Activated naive CD4-positive, alpha-beta T cell treated with anti-CD3 and anti-CD28 coated beads for 36 hours (primary cell): ENCODE measurements at regions of chr5 and their contacts with region 1.

Region 1: GRCh38 chr5:77491783-77492652 is at the start of gene WDR41:
- DNase-seq: peak; percentile 86
- H3K4me3 Mint-ChIP-seq: peak within 1 kb of the TSS; percentile 89
- H3K27ac Mint-ChIP-seq: peak within 1 kb of the TSS; percentile 82
- H3K4me1 Mint-ChIP-seq: peaks cover 15% of the 10 kb centered on the region
- H3K27me3 Mint-ChIP-seq: peaks cover 6% of the 10 kb centered on the region
- total RNA-seq, gene WDR41: 22.4 to 23.0 TPM

Region 2: DNA sequence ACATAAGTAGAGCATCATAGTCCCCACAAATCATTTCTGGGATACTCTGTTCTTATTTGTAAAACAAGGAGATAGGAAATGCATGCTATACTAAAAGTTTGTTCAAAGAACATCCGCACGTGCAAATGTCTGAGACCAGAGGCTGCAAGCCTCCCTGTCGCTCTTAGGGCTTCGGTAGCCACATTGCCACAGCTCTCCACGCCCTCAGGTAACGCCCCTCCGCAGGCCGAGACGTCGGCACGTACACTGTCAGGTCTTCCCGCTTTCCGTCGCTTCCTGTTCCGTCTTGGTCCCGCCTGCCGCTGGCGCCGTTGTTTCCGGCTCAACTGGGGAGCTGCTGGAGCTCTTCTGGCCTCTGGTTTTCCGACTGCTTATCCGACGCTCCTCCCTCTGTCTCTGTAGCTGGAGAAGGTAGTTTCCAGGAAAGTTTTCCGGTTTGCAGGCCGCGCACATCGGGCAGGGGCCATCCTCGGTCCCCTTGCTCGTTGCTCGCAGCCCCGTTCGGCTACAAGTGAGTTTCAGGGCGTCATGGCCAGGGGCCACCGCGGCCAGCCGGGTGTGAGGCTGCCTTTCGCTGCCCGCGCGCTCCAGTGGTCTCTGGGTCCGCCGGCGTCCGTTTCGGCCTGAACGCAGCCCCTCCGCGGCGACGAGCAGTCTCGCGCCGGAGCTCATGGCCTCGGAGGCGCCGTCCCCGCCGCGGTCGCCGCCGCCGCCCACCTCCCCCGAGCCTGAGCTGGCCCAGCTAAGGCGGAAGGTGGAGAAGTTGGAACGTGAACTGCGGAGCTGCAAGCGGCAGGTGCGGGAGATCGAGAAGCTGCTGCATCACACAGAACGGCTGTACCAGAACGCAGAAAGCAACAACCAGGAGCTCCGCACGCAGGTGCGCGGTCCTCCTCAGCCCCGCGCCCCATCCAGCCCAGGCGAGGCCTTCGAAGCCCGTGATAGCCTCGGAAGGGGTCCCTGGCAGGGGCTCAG is 461.6 kb before region 1 on chr5 and contains the start of gene AGGF1:
- CTCF ChIA-PET with region 1: interaction called, 5 read pairs
- intact Hi-C with region 1: loop called (anchors 1 kb)
- DNase-seq: peak; percentile 96
- H3K4me3 Mint-ChIP-seq: peak within 1 kb of the TSS; percentile 91
- H3K27ac Mint-ChIP-seq: peak within 1 kb of the TSS; percentile 88
- H3K4me1 Mint-ChIP-seq: peaks cover 23% of the 10 kb centered on the region
- H3K27me3 Mint-ChIP-seq: no peaks in the 10 kb centered on the region
- total RNA-seq, gene AGGF1: 20.3 to 23.0 TPM

Region 3: DNA sequence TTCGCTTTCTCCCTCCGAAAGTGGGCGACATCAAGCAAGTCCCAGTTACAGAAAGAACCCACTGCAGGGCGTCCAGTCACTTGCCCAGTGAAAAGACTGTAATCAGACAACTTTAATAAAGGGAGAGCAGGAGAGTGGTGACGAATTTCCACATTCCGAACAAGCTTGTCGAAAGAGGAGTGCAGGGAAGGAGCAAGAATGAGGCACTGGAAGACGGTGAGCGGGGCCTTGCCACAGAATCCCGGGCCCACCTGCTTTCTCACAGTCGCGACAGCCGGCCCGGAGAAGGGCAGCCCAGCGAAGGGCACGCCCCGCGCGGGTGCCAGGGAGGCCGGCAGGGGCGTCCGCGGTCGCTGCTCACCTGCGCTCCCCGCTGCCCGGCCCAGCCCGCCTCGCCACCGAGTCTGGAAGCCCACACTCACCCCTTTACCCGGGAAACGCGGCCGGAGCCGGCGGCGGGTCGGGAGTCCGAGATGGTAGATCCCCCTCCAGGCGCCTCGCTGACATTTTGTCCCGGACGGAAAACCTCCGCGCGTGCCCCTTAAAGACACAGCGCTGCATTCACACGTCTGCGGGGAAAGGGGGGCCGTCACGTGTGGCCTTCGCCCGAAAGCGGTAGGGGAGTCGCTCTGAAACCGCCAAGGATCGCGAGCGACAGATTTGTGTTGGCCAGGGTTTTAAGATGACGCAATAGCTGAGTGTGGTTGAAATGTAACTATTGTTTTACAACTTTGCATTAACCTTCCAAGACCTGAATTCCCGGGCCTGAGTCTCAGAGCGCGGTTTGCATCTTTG is 405.1 kb before region 1 on chr5 and contains the start of gene ZBED3:
- CTCF ChIA-PET with region 1: no interaction called
- intact Hi-C with region 1: loop called (anchors 2 kb)
- DNase-seq: peak; percentile 73
- H3K4me3 Mint-ChIP-seq: peak within 1 kb of the TSS; percentile 87
- H3K27ac Mint-ChIP-seq: peak within 1 kb of the TSS; percentile 36
- H3K4me1 Mint-ChIP-seq: peaks cover 9% of the 10 kb centered on the region
- H3K27me3 Mint-ChIP-seq: no peaks in the 10 kb centered on the region
- total RNA-seq, gene ZBED3: 1.9 to 3.3 TPM

Region 4: GRCh38 chr5:77155179-77155785 is 336.7 kb before region 1 on chr5:
- CTCF ChIA-PET with region 1: interaction called, 11 read pairs
- intact Hi-C with region 1: no loop called
- DNase-seq: peak; percentile 66
- H3K4me3 Mint-ChIP-seq: no peak overlapping the region
- H3K27ac Mint-ChIP-seq: peak overlapping the region; percentile 60
- H3K4me1 Mint-ChIP-seq: peaks cover 27% of the 10 kb centered on the region
- H3K27me3 Mint-ChIP-seq: no peaks in the 10 kb centered on the region

Region 5: DNA sequence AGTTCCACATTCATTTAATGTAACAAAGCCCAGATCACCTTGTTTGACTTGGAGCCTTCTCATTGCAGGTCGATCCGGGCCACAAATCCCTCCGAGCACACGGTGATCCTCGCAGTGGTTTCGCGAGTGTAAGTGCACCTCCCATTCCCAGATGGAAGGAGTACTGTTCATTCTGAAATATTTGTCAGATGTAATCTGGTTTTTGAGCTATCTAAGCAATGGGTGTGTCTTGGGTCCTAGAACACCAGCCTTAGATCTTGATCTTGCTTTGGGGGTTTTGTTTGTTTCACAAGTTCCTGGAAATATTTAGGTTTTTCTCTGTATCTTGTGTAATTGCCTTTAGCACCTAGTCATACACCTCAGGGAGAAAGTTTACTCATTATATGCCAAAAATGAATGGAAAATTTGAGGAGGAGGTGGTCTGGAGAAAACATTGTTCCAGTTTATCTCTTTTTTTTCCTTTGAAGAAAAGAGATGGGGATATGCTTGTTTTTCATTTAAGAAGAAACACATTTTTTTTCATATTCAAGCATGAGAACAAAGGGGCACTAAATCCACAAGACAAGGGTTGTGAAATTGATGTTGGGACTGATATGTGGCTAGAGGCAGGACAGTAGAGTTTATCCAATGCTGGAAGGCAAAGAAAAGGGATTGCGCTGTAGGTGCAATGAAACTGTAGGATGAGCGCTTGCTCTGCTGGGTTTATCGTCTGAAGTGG is 162.9 kb before region 1 on chr5:
- CTCF ChIA-PET with region 1: interaction called, 6 read pairs
- intact Hi-C with region 1: loop called (anchors 10 kb)
- DNase-seq: no peak
- H3K4me3 Mint-ChIP-seq: no peak overlapping the region
- H3K27ac Mint-ChIP-seq: peak overlapping the region; percentile 66
- H3K4me1 Mint-ChIP-seq: peaks cover 24% of the 10 kb centered on the region
- H3K27me3 Mint-ChIP-seq: peaks cover 4% of the 10 kb centered on the region

Region 6: GRCh38 chr5:77339337-77339890 is 152.6 kb before region 1 on chr5:
- CTCF ChIA-PET with region 1: no interaction called
- intact Hi-C with region 1: no loop called
- DNase-seq: no peak
- H3K4me3 Mint-ChIP-seq: no peak overlapping the region
- H3K27ac Mint-ChIP-seq: no peak overlapping the region
- H3K4me1 Mint-ChIP-seq: no peaks in the 10 kb centered on the region
- H3K27me3 Mint-ChIP-seq: no peaks in the 10 kb centered on the region

Region 7: GRCh38 chr5:77590347-77590746 is 98.3 kb after region 1 on chr5:
- CTCF ChIA-PET with region 1: no interaction called
- intact Hi-C with region 1: no loop called
- DNase-seq: no peak
- H3K4me3 Mint-ChIP-seq: no peak overlapping the region
- H3K27ac Mint-ChIP-seq: no peak overlapping the region
- H3K4me1 Mint-ChIP-seq: no peaks in the 10 kb centered on the region
- H3K27me3 Mint-ChIP-seq: peaks cover 33% of the 10 kb centered on the region

Region 8: GRCh38 chr5:77775790-77776553 is 284.0 kb after region 1 on chr5 and contains the start of gene TBCA:
- CTCF ChIA-PET with region 1: no interaction called
- intact Hi-C with region 1: loop called (anchors 1 kb)
- DNase-seq: peak; percentile 81
- H3K4me3 Mint-ChIP-seq: peak within 1 kb of the TSS; percentile 93
- H3K27ac Mint-ChIP-seq: peak within 1 kb of the TSS; percentile 96
- H3K4me1 Mint-ChIP-seq: peaks cover 46% of the 10 kb centered on the region
- H3K27me3 Mint-ChIP-seq: no peaks in the 10 kb centered on the region
- total RNA-seq, gene TBCA: 168 to 190 TPM

Region 9: DNA sequence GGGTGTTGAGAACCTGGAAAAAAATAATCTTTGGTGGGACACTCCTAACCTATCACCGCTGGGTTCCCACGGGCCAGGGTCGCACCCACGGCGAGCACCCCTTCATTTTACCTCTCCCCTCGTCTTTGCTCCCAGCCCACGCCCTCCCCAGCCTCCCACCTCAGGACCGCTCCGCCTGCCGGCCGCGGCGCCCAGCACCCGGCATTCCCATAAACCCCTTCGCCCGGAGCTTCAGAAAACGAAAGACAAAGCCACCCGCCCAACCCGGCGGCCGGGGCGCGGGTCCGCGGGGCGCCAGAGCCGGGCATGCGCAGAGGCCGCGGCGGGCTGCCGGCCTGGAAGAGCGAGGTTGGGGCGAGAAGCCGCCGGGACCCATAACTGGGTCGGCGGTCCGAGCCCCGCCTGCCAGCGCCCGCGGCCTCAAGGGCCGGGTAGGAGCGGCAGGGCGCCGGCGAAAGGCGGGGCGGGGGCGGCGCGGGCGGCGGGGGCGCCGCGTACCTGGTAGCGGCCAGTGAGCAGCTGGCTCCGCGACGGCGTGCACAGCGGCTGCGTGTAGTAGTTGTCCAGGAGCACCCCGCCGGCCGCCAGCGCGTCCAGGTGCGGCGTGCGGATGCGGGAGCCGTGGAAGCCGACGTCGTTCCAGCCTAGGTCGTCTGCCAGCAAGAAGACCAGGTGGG is 1492.6 kb after region 1 on chr5:
- CTCF ChIA-PET with region 1: no interaction called
- intact Hi-C with region 1: loop called (anchors 10 kb)
- DNase-seq: peak; percentile 81
- H3K4me3 Mint-ChIP-seq: peak overlapping the region; percentile 84
- H3K27ac Mint-ChIP-seq: peak overlapping the region; percentile 87
- H3K4me1 Mint-ChIP-seq: peaks cover 35% of the 10 kb centered on the region
- H3K27me3 Mint-ChIP-seq: no peaks in the 10 kb centered on the region